ENCODE measurements at regions of chr16 and their contacts with region 1.

Region 1: DNA sequence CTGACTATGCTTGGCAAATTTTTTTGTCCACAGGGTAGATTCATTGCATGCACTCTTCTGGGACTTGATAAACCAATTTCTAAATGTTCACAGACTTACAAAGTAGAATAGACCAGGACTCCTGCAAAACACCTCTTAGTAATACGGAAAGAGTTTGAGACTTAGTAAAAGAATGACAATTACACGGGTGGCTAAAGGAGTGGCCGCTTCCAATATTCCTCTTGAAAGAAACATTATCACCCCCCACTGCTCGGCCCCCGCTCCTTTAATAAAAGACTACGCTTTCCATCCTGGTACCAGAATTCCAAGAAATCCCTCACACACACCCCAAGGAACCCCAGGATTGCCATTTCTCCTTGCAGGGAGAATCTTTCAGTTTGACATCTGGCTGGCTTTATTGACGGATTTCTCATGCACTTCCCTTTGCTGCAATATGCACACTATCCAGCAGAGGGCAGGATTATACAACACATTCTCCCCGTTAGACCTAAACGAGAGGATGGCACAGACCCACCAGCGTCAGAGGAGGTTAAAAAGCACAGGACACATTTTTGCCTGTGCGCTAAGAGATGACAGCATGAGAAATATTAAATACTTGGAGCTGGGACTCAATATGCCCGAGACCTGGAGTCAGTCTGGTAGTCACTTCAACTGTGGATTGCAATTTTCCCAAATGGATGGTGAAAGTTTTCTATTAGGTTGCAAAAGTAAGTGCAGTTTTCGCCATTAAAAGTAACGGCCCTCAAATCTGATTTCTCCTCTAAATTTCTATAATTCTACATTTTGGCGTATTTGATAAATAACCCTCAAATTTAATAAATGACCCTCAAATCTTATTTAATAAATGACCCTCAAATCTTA is 46.6 kb upstream of the NUDT7 start:
- DNase-seq: no peak
- ATAC-seq: peak; percentile 90 to 91
- H3K4me3 ChIP-seq: no peak overlapping the region
- H3K27ac ChIP-seq: no peak overlapping the region
- H3K4me1 ChIP-seq: peaks cover 5% of the 10 kb centered on the region
- H3K27me3 ChIP-seq: no peaks in the 10 kb centered on the region
- CTCF ChIP-seq: peak; percentile 88

Region 2: DNA sequence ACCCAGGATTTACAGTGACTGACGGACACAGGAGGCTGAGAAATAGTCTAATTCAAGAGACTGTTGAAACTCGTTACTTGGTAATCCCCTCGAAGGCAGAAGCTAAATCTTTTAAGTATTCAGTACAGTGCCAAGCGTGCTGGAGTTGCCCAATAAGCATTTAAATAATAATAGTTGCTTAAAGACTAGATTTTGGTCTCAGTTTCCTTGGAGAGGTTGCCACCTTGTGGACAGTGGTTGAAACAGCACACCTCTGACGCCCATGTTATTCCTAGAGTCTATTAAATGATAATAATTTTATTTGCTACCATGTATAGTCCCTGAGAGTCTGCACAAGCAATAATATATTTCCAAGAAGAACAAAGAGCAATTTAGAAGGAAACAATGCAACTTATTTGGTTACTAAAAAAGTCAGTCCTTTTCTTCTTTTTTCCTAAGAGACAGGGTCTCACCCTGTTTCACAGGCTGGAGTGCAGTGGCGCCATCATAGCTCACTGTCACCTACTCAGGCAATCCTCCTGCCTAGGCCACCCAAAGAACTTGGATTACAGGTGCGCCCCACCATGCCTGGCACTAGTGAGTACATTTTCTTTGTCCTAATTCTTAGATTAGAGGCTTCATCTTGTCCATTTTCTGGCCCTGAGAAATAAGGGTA is 91.4 kb before region 1 on chr16:
- intact Hi-C with region 1: no loop called
- DNase-seq: no peak
- ATAC-seq: peak; percentile 73 to 77
- H3K4me3 ChIP-seq: no peak overlapping the region
- H3K27ac ChIP-seq: no peak overlapping the region
- H3K4me1 ChIP-seq: no peaks in the 10 kb centered on the region
- H3K27me3 ChIP-seq: no peaks in the 10 kb centered on the region
- CTCF ChIP-seq: peak; percentile 90

Region 3: DNA sequence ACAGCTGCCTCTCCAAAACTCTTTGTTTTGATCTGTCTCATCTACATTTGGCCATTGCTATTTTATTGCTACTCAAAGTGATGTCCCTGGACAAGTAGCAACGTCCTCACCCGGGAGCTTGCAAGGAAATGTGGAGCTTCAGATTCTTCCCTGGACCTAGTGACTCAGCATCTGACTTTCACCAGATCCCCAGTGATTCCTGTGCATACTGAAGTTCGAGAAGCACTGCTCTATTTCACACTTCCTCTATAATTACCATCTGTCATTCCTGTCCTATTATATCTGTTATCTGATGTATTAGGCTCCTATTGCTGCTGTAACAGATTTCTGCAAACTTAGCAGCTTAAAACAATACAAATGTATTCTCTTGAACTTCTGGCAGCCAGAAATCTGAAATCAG is 84.1 kb after region 1 on chr16:
- intact Hi-C with region 1: no loop called
- DNase-seq: no peak
- ATAC-seq: no peak
- H3K4me3 ChIP-seq: no peak overlapping the region
- H3K27ac ChIP-seq: no peak overlapping the region
- H3K4me1 ChIP-seq: peaks cover 16% of the 10 kb centered on the region
- H3K27me3 ChIP-seq: no peaks in the 10 kb centered on the region
- CTCF ChIP-seq: no peak

Region 4: DNA sequence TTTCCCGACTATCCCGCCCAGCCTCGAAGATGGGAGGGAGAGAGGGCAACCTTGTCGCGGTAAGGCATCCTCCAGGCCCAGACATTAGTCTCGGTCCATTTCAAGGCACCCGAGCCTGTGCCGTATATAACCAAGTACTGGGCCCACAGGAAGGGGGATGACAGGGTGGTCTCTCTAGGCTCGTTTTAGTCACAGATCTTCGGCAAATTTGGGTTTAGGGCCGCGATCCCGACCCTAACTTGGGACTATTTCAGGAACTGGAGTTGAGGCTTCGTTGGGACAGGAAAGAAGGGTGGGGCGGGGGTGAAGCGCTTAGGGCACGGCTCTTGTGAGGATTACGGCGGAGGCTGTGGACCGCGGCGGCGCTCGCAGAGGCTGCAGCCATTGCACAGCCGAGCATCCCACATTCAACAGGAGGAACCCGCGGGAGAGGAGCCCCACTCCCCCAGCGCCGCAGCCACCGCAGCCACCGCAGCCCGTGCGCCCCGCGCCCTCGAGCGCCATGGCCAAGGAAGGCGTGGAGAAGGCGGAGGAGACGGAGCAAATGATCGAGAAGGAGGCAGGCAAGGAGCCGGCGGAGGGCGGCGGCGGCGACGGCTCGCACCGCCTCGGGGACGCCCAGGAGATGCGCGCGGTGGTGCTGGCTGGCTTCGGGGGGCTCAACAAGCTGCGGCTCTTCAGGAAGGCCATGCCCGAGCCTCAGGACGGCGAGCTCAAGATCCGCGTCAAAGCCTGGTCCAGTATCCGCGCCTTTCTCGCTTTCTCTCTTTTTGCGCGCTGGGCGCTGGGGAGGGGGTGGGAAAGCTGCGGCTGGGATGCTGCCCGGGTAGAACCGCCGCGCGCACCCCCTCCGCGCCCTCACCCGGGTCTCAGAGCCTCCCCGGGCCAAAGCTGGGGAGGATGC is 112.7 kb after region 1 on chr16 and contains the start of gene VAT1L:
- intact Hi-C with region 1: loop called (anchors 10 kb)
- DNase-seq: no peak
- ATAC-seq: peak; percentile 63 to 77
- H3K4me3 ChIP-seq: peak within 1 kb of the TSS; percentile 54
- H3K27ac ChIP-seq: no peak within 1 kb of the TSS
- H3K4me1 ChIP-seq: peaks cover 16% of the 10 kb centered on the region
- H3K27me3 ChIP-seq: peaks cover 46% of the 10 kb centered on the region
- CTCF ChIP-seq: no peak
- total RNA-seq, gene VAT1L: 0.38 TPM

Region 5: DNA sequence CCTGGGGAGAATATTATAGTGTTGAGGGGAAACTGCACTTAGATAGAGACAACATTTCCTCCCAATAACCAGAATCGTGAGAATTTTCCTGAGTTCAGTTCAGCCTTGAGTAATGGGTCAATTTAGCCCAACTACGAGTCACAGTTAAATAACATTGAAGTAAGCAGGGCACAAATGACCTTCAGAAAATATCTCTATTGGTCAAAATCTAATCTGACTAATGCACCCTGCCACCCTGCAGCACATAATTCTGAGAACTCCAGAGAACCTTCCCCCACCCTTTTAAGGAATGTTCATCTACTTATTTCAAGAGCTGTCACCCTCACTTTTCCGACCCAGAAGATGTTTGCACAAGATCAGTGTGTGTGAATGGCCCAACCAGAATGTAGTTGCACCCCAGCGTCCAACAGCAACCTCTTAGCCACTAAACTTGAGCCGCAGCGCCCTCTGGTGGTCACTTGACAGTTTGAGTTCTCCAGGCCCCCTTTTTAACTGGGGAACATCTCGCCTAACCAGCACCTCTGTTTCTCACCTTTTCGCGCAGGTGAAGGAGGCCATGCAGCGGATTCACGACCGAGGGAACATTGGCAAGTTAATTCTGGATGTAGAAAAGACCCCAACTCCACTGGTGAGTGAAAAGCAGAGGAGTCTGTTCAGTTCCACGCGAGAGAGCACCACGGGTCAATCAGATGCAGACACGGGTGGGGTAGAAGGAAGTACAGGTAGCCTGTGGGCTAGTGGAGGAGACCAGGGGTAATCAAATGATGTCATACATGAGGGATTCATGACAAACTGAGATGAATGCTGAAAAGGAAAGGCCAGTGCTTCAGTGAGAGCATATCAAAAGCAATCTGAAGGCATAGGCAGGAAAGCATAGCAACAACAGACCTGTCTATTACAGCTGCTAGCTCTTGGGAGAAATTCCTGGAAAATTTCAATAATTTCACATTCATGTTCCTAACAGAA is 295.9 kb after region 1 on chr16:
- intact Hi-C with region 1: loop called (anchors 5 kb)
- DNase-seq: peak; percentile 88
- ATAC-seq: peak; percentile 93
- H3K4me3 ChIP-seq: no peak overlapping the region
- H3K27ac ChIP-seq: no peak overlapping the region
- H3K4me1 ChIP-seq: peaks cover 3% of the 10 kb centered on the region
- H3K27me3 ChIP-seq: no peaks in the 10 kb centered on the region
- CTCF ChIP-seq: peak; percentile 75